Caco-2 (cell line): ENCODE measurements at regions of chr14 and their contacts with region 1.

Region 1: GRCh38 chr14:53881161-53881871 is 75.3 kb downstream of the BMP4 start:
- DNase-seq: peak; percentile 38 to 59
- H3K4me3 ChIP-seq: peak overlapping the region; percentile 8
- H3K4me3 Mint-ChIP-seq: peak overlapping the region; percentile 56
- H3K27ac Mint-ChIP-seq: peak overlapping the region; percentile 59
- H3K4me1 ChIP-seq: peaks cover 41% of the 10 kb centered on the region
- H3K4me1 Mint-ChIP-seq: peaks cover 34% of the 10 kb centered on the region
- H3K27me3 ChIP-seq: no peaks in the 10 kb centered on the region
- H3K27me3 Mint-ChIP-seq: no peaks in the 10 kb centered on the region
- CTCF ChIP-seq: no peak

Region 2: GRCh38 chr14:53865711-53866110 is 15.6 kb before region 1 on chr14:
- CTCF ChIA-PET with region 1: no interaction called
- POLR2A ChIA-PET with region 1: no interaction called
- intact Hi-C with region 1: no loop called
- DNase-seq: no peak
- H3K4me3 ChIP-seq: no peak overlapping the region
- H3K4me3 Mint-ChIP-seq: no peak overlapping the region
- H3K27ac Mint-ChIP-seq: no peak overlapping the region
- H3K4me1 ChIP-seq: peaks cover 3% of the 10 kb centered on the region; the same call in 1 of the 2 replicates
- H3K4me1 Mint-ChIP-seq: no peaks in the 10 kb centered on the region
- H3K27me3 ChIP-seq: no peaks in the 10 kb centered on the region
- H3K27me3 Mint-ChIP-seq: no peaks in the 10 kb centered on the region
- CTCF ChIP-seq: no peak

Region 3: GRCh38 chr14:53924754-53925153 is 43.4 kb after region 1 on chr14:
- CTCF ChIA-PET with region 1: no interaction called
- POLR2A ChIA-PET with region 1: no interaction called
- intact Hi-C with region 1: loop called (anchors 5 kb)
- DNase-seq: no peak
- H3K4me3 ChIP-seq: no peak overlapping the region
- H3K4me3 Mint-ChIP-seq: no peak overlapping the region
- H3K27ac Mint-ChIP-seq: peak overlapping the region; percentile 27
- H3K4me1 ChIP-seq: peaks cover 63% of the 10 kb centered on the region
- H3K4me1 Mint-ChIP-seq: peaks cover 66% of the 10 kb centered on the region
- H3K27me3 ChIP-seq: no peaks in the 10 kb centered on the region
- H3K27me3 Mint-ChIP-seq: no peaks in the 10 kb centered on the region
- CTCF ChIP-seq: no peak